ENCODE measurements at regions of chr1 and their contacts with region 1.

Region 1: DNA sequence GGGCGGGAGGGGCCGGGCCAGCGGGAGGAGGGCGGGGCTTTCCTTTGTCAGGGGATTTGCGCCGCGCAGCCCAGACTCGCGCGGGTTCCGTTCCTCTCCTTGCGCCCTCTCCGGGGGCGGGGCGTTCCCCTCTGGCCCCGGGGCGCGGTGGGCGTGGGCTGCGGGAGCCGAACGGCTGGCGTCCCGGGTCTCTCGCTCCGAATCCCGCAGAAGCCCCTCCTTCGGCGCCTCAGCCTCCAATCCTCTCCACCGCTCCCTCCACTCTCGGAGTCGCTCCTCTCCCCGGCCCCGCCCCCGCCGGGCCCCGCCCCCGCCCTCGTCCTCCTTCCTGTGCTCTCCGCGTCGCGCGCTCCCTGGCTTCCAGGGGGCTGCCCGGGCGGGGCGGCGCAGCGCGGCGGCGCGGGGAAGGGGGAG is 82.8 kb upstream of the BMP8A start:
- DNase-seq: peak; percentile 95
- CTCF ChIP-seq: no peak

Region 2: GRCh38 chr1:39387452-39387851 is 21.2 kb before region 1 on chr1:
- CTCF ChIA-PET with region 1: interaction called, 12 read pairs
- POLR2A ChIA-PET with region 1: no interaction called
- DNase-seq: no peak
- CTCF ChIP-seq: no peak

Region 3: GRCh38 chr1:39398278-39399021 is 10.2 kb before region 1 on chr1:
- CTCF ChIA-PET with region 1: interaction called, 33 read pairs
- POLR2A ChIA-PET with region 1: interaction called, 3 read pairs
- DNase-seq: no peak
- CTCF ChIP-seq: no peak

Region 4: DNA sequence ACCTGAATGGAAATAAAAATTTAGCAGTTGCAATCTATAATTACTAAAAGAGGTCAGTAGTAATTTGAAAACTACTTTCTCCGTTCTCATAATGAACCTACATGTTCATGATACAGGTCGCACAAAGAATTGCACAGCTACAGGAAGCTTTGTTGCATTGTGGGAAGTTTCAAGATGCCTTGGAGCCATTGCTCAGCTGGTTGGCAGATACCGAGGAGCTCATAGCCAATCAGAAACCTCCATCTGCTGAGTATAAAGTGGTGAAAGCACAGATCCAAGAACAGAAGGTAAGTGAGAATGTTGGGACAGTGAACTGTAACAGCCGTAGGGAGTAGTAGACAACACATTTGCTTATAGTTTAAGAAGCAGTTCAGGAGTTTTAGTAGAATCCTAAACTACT is 14.0 kb after region 1 on chr1:
- CTCF ChIA-PET with region 1: interaction called, 32 read pairs
- POLR2A ChIA-PET with region 1: no interaction called
- DNase-seq: no peak
- CTCF ChIP-seq: no peak